Thyroid gland (tissue), 4 donors: ENCODE measurements at regions of chr20 and their contacts with region 1.

Region 1: DNA sequence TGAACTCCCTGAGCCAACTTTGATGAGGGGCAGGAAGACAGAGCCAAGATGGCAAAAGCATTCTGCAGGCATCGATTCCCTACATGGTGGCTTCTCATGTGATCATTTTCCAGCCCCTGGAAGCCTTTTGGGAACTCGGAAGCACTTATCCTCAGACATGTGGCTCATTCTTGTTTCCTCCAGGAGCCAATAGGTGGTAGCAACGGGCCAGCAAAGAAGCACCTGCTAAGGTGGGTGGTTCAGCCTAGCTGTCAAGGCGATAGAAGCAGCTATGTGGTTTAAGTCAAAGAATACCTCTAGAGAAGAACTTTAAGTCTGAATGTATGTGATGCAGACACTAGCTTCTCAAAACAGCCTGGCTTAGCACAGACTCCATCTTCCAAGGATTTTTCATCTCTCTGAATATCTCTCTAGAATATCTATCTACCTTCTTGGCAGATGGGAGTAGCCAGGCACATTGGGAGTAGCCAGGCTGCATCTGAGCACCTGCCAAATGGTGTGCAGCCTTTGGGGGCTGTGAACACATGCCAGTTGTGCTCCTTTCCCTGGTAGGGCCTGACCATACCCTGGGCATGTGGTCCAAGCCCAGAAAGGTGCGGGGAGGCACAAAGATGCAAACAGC is 64.8 kb upstream of the PAX1 start:
- DNase-seq: peak; percentile 63 to 70
- H3K4me3 ChIP-seq: no peak overlapping the region
- H3K27ac ChIP-seq: no peak overlapping the region
- H3K4me1 ChIP-seq: no peaks in the 10 kb centered on the region
- H3K27me3 ChIP-seq: no peaks in the 10 kb centered on the region
- CTCF ChIP-seq: peak in 4 of 6 experiments; percentile 63 to 87 (median 76)
- POLR2A ChIP-seq: no peak

Region 2: GRCh38 chr20:21693322-21693721 is 52.6 kb after region 1 on chr20:
- intact Hi-C with region 1: loop called (anchors 2 kb)
- DNase-seq: peak; percentile 48 to 61
- H3K4me3 ChIP-seq: no peak overlapping the region
- H3K27ac ChIP-seq: no peak overlapping the region
- H3K4me1 ChIP-seq: peaks cover 0 to 3% of the 10 kb centered on the region in 2 donors
- H3K27me3 ChIP-seq: no peaks in the 10 kb centered on the region
- CTCF ChIP-seq: peak; percentile 20 to 69 (median 54)
- POLR2A ChIP-seq: no peak

Region 3: DNA sequence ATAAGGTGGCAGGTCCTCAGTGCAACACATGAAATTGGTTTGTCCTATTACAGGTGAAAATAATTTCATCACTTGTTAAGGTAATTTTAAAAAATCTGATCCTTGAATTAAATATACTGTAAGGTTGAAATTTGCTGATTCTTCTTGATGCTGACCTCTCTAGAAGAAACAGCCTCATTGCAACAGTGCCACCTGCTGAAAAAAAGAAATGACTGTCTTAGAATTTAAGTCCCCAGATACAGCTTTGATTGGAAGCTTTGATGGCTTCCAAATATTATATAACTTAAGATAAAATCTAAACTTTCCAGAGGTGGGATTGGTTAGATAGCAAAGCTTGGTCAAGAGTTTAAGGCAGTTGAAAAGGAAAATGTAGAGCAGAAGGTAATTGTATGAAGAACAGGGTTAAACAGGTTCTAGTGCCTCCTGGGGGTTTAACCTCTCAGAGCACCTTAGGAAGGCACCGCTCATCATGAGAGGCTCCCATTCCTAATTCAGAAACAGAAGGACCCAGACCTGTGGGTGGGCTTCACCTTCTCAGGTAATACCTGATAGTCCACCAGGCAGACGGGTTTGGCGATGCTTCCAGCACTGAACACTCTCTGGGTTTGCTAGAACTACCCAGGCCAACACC is 465.8 kb after region 1 on chr20:
- intact Hi-C with region 1: loop called (anchors 10 kb)
- DNase-seq: no peak
- H3K4me3 ChIP-seq: no peak overlapping the region
- H3K27ac ChIP-seq: no peak overlapping the region
- H3K4me1 ChIP-seq: no peaks in the 10 kb centered on the region
- H3K27me3 ChIP-seq: no peaks in the 10 kb centered on the region
- CTCF ChIP-seq: peak in 3 of 6 experiments; percentile 33 to 48 (median 34)
- POLR2A ChIP-seq: no peak